ENCODE measurements at regions of chr16 and their contacts with region 1.

Region 1: GRCh38 chr16:1705688-1706385 is at the start of gene MAPK8IP3:
- DNase-seq: peak; percentile 95
- H3K4me3 Mint-ChIP-seq: peak within 1 kb of the TSS; percentile 96
- H3K27ac Mint-ChIP-seq: peak within 1 kb of the TSS; percentile 92
- H3K4me1 Mint-ChIP-seq: peaks cover 33% of the 10 kb centered on the region
- H3K27me3 Mint-ChIP-seq: no peaks in the 10 kb centered on the region
- total RNA-seq, gene MAPK8IP3: 51.7 to 56.8 TPM

Region 2: DNA sequence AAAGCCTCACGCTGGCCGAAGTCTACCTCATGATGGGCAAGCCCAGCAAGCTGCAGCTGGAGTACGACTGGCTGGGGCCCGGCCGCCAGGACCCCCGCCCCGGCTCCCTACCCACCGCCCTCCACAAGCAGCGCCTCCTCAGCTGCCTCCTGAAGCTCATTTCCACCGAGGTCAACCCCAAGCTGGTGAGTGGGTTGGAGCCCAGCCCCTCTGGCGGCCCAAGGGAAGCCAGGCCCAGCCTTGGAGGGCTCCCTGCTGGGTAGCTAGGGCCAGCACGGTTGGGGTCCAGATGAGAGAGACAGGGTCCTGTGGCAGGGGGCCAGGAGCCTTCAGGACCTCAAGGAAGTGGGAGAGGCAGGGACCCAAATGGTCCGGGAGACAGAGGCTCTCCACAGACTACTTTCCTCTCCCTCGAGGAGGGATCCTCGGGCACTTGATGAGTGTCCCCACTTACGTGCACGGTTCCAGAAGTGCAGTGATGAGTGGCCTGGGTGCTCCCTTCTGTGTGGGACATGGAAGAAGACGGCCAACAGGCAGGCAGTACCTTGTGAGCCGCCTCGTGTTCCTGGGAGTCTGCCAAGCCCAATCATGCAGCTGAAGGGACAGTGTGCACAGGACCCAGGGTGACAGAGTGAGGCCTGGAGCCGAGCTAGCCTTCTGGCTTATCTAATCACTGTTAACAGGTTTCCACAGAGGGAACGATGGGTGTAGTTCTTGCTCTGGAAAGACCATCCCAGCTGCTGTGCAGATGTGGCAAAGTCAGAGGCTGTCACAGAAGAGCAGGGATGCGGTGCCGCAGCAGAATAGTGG is 48.8 kb before region 1 on chr16:
- CTCF ChIA-PET with region 1: no interaction called
- POLR2A ChIA-PET with region 1: no interaction called
- intact Hi-C with region 1: no loop called
- DNase-seq: no peak
- H3K4me3 Mint-ChIP-seq: no peak overlapping the region
- H3K27ac Mint-ChIP-seq: no peak overlapping the region
- H3K4me1 Mint-ChIP-seq: no peaks in the 10 kb centered on the region
- H3K27me3 Mint-ChIP-seq: no peaks in the 10 kb centered on the region

Region 3: DNA sequence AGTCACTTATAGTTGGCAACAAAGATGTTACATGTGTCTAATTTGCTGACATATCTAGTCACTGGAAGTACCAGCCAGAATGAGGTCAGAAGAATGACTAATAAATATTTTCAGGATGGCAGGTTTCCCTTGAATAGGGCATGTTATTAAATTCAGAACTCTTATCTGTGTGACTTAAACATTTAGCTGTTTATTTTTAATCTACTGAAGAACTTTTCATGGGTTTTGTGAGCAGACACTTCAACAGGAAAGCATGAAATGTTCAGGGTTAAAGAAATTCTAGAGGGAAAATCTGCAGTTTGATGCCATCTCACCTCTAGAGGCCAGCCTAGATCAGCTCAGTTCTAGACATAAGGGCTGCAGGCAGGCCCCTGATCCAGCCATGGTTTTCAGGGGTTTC is 14.6 kb before region 1 on chr16:
- CTCF ChIA-PET with region 1: interaction called, 10 read pairs
- POLR2A ChIA-PET with region 1: interaction called, 3 read pairs
- intact Hi-C with region 1: no loop called
- DNase-seq: no peak
- H3K4me3 Mint-ChIP-seq: no peak overlapping the region
- H3K27ac Mint-ChIP-seq: no peak overlapping the region
- H3K4me1 Mint-ChIP-seq: peaks cover 12% of the 10 kb centered on the region
- H3K27me3 Mint-ChIP-seq: no peaks in the 10 kb centered on the region

Region 4: GRCh38 chr16:1772736-1773584 is 67.1 kb after region 1 on chr16 and contains the starts of genes EME2 and MRPS34:
- CTCF ChIA-PET with region 1: interaction called, 13 read pairs
- POLR2A ChIA-PET with region 1: no interaction called
- intact Hi-C with region 1: loop called (anchors 2 kb)
- DNase-seq: peak; percentile 87
- H3K4me3 Mint-ChIP-seq: peak within 1 kb of the TSS; percentile 94
- H3K27ac Mint-ChIP-seq: peak within 1 kb of the TSS; percentile 94
- H3K4me1 Mint-ChIP-seq: peaks cover 6% of the 10 kb centered on the region
- H3K27me3 Mint-ChIP-seq: no peaks in the 10 kb centered on the region
- total RNA-seq, gene EME2: 11.9 to 15.3 TPM
- total RNA-seq, gene MRPS34: 151 to 152 TPM

Measured in activated CD4-positive, alpha-beta memory T cell treated with anti-CD3 and anti-CD28 coated beads for 36 hours (primary cell).